ENCODE measurements at regions of chr2 and their contacts with region 1.

Region 1: DNA sequence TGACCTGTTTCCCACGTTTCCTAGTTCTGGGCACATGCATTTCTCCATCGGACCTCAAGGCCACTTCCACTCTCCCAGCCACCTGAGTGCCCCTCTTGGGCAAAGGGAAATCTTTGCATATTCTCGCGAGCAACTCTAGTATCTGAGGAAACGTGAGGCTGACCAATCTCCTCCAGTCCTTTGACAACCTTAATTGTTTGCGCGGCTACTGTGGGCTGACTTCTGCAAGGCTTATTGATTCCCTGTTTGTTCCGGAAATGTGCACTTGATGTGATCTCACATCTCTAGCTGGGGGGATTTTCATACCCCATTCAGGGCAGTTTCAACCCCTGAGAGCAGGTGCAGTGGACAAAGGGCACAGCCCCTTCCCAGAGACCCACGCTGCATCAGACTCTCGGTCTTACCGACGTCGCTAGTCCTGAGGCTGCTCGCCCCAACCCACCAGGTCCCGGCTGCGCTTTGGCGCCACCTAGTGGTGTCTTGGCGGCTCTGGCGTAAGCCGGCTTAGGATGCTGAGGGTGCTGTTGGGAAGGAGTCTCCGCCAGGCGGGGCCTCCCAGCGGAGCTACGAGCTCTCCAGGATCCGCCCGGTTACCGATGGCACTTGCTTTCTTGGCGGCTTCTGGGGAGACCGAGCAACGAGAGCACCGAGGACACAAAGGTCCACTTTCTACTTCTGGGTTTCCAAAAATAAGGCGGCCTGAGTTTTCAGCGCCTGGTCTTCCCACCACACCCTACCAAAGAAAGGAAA is 24.8 kb upstream of the SPR start:
- DNase-seq: peak; percentile 93 to 97
- H3K4me3 ChIP-seq: peak overlapping the region; percentile 36
- H3K4me3 Mint-ChIP-seq: peak overlapping the region; percentile 73
- H3K27ac Mint-ChIP-seq: no peak overlapping the region
- H3K4me1 ChIP-seq: peaks cover 8% of the 10 kb centered on the region
- H3K4me1 Mint-ChIP-seq: peaks cover 6% of the 10 kb centered on the region
- H3K27me3 ChIP-seq: no peaks in the 10 kb centered on the region
- H3K27me3 Mint-ChIP-seq: no peaks in the 10 kb centered on the region
- CTCF ChIP-seq: peak; percentile 95 to 99

Region 2: GRCh38 chr2:72806280-72806945 is 56.0 kb before region 1 on chr2:
- CTCF ChIA-PET with region 1: interaction called, 5 read pairs
- POLR2A ChIA-PET with region 1: no interaction called
- intact Hi-C with region 1: loop called (anchors 2 kb)
- DNase-seq: no peak
- H3K4me3 ChIP-seq: no peak overlapping the region
- H3K4me3 Mint-ChIP-seq: no peak overlapping the region
- H3K27ac Mint-ChIP-seq: no peak overlapping the region
- H3K4me1 ChIP-seq: no peaks in the 10 kb centered on the region
- H3K4me1 Mint-ChIP-seq: peaks cover under 1% of the 10 kb centered on the region
- H3K27me3 ChIP-seq: no peaks in the 10 kb centered on the region
- H3K27me3 Mint-ChIP-seq: no peaks in the 10 kb centered on the region
- CTCF ChIP-seq: no peak

Region 3: DNA sequence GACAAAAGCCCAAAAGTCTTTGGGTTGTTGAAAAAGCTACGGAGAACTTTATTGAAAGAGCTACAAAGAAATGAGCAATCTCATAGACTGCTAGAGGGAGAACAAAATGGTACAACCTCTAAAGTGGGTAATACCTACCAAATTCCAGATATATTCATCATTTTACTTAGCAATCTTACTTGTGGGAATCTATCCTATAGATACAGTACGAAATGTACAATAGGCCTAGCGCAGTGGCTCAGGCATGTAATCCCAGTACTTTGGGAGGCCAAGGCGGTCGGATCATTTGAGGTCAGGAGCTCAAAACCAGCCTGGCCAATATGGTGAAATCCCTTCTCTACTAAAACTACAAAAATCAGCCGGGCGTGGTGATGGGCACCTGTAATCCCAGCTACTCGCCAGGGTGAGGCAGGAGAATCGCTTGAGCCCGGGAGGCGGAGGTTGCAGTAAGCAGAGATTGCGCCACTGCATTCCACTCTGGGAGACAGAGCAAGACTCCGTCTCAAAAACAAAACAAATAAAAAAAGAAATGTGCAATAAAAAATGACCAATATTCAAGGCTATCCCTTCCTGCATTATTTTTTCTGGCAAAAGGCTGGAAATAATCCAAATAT is 46.7 kb before region 1 on chr2:
- CTCF ChIA-PET with region 1: interaction called, 9 read pairs
- POLR2A ChIA-PET with region 1: no interaction called
- intact Hi-C with region 1: loop called (anchors 1 kb)
- DNase-seq: peak; percentile 69 to 76
- H3K4me3 ChIP-seq: no peak overlapping the region
- H3K4me3 Mint-ChIP-seq: no peak overlapping the region
- H3K27ac Mint-ChIP-seq: no peak overlapping the region
- H3K4me1 ChIP-seq: 0 out of 2 replicates have a peak, but pooled peaks cover 4% of the 10 kb centered on the region
- H3K4me1 Mint-ChIP-seq: peaks cover 23% of the 10 kb centered on the region
- H3K27me3 ChIP-seq: no peaks in the 10 kb centered on the region
- H3K27me3 Mint-ChIP-seq: no peaks in the 10 kb centered on the region
- CTCF ChIP-seq: peak; percentile 3 to 48

Region 4: DNA sequence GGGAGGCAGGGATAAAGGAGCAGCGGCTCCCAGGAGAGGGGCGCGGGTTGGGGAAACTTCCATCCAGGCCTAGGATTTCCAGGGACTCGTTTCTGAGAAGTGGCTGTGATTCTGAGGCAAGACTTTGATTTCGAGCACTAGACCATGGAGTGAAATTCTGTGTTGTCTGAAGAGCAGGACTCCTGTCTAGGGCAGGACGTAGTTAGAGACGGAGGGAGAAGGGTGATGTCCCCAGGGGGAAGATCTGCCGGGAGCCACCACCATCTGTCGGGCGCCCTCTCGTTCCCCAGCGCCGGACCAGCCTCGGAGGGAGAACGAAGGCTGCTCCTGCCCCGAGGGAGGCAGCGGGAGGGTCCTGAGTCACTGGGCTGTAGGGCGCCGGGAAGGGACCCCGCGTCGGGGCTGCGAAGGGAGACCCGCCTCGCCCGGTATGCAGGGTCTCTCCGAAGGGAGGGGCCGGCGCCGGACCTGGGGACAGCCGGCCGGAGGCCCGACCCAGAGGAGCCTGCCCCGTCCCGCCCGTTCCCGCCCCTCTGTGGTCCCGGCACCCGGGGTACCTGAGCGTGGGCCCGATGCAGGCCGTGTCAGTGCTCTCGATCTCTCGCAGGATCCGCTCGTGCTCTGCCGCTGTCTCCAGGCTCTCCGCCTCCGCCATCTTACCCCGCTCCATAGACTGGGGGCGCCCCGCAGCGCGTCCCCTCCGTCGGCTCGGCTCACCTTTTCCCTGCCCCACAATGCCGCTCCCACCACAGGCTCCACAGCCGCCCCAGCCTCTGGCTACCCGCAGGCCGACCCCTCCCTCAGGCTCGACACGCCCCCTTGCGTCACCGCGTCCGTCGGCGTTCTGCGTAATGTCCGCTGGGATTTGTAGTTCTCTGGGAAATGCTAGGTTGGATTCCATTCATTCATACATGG is 36.9 kb before region 1 on chr2 and contains the start of gene EXOC6B:
- CTCF ChIA-PET with region 1: interaction called, 6 read pairs
- POLR2A ChIA-PET with region 1: no interaction called
- intact Hi-C with region 1: loop called (anchors 1 kb)
- DNase-seq: peak; percentile 95 to 98
- H3K4me3 ChIP-seq: peak within 1 kb of the TSS; percentile 89
- H3K4me3 Mint-ChIP-seq: peak within 1 kb of the TSS; percentile 87
- H3K27ac Mint-ChIP-seq: peak within 1 kb of the TSS; percentile 98
- H3K4me1 ChIP-seq: peaks cover 52% of the 10 kb centered on the region
- H3K4me1 Mint-ChIP-seq: peaks cover 55% of the 10 kb centered on the region
- H3K27me3 ChIP-seq: no peaks in the 10 kb centered on the region
- H3K27me3 Mint-ChIP-seq: no peaks in the 10 kb centered on the region
- CTCF ChIP-seq: no peak
- total RNA-seq, gene EXOC6B: 36.1 and 38.0 TPM in 2 replicates

Region 5: DNA sequence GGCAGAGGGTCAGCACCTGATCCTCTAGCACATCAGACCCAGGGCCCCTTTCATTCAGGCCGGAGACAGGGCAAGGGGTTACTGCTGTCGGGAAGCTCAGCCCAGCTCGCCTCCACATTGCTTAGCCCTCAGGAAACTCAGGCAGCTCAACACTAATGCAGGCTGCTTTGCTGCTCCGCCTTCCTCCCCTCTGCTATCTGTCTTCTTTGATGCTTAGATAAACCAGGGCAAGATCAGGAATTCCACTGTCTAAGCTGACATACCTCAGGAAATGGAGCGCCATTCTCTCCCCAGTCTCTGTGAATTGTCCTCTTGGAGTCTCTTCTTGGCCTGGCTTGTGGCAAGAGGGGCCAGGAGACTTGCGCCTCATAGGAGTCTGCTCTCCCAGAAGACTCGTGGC is 11.1 kb before region 1 on chr2:
- CTCF ChIA-PET with region 1: interaction called, 18 read pairs
- POLR2A ChIA-PET with region 1: no interaction called
- intact Hi-C with region 1: no loop called
- DNase-seq: peak; percentile 63 to 73
- H3K4me3 ChIP-seq: no peak overlapping the region
- H3K4me3 Mint-ChIP-seq: no peak overlapping the region
- H3K27ac Mint-ChIP-seq: peak overlapping the region; percentile 7
- H3K4me1 ChIP-seq: peaks cover 31% of the 10 kb centered on the region
- H3K4me1 Mint-ChIP-seq: peaks cover 13% of the 10 kb centered on the region
- H3K27me3 ChIP-seq: no peaks in the 10 kb centered on the region
- H3K27me3 Mint-ChIP-seq: no peaks in the 10 kb centered on the region
- CTCF ChIP-seq: no peak